ENCODE measurements at regions of chr5 and their contacts with region 1.

Region 1: GRCh38 chr5:81301271-81302015 is at the start of gene ZCCHC9:
- DNase-seq: peak; percentile 92
- CTCF ChIP-seq: no peak

Region 2: DNA sequence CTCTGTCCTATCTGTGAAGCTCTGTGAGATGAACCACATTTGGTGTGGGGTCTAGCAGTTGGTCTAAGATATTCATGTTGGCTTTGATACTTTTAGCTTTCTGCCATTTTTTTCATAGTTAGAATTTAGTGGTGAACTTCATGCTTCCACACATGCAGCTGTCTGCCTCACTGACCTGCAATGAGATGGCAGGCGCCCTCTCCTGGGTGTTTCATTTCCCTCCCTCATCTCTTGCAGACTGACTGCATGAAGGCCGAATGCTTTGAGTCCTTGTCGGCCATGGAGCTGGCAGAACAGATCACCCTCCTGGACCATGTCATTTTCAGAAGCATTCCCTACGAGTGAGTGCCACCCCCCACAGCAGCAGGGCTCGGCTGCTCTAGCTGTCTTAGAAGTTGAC is 94.4 kb before region 1 on chr5:
- CTCF ChIA-PET with region 1: interaction called, 14 read pairs
- POLR2A ChIA-PET with region 1: no interaction called
- DNase-seq: no peak
- CTCF ChIP-seq: peak; percentile 21

Region 3: DNA sequence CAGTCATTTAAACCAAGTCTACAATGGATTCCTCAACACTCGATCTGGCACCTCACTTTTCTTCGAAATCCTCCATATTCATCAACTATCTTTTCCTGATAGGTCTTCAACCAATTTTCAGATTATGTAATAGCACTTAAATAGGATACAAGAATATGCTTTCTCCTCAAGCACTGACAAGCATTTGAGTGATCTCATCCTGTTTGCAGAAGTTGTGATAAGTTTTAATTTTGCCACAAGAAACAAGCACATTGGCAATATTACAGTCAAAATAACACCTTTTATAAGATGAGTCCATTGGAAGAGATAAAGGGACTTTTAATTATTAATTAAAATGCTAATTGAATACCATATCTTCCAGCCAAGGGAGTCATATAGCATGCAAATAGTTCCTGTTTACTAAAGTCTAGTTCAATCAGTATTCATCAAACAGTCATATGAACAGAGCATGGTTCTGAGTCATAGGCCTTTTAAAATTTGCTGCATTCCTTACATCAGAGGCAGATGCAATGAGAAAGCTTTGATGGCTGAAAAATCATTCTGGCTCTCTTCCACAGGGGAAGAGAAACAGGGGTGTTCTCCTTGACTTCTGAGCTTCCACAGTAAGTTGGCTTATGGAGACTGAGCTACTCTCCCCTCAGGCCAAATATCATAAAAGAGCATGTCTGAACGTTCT is 32.8 kb before region 1 on chr5:
- CTCF ChIA-PET with region 1: interaction called, 14 read pairs
- POLR2A ChIA-PET with region 1: no interaction called
- DNase-seq: no peak
- CTCF ChIP-seq: no peak

Region 4: GRCh38 chr5:81288021-81288433 is 13.4 kb before region 1 on chr5:
- CTCF ChIA-PET with region 1: interaction called, 17 read pairs
- POLR2A ChIA-PET with region 1: no interaction called
- DNase-seq: peak; percentile 9
- CTCF ChIP-seq: no peak

Region 5: DNA sequence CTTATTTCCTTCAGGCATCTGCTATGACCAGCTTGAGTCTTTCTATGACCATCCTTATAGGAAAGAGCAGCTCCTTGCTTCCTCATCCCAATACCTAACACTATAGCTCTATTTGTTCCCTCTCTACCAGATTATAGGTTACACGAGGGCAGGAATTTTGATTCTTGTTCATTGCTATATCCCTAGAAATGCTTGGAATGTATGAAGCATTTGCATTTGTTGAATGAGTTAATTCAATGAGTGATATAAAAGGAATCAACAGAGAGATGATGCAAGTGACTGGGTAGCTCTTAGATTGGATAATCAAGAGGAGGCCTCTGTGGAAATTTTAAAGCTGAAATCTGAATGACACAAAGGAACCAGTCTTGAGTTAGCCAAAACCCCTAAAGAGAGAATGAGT is 13.9 kb after region 1 on chr5:
- CTCF ChIA-PET with region 1: interaction called, 23 read pairs
- POLR2A ChIA-PET with region 1: no interaction called
- DNase-seq: no peak
- CTCF ChIP-seq: no peak